Endothelial cell of umbilical vein (primary cell): ENCODE measurements at regions of chr17 and their contacts with region 1.

Region 1: GRCh38 chr17:56779898-56780733 is 53.6 kb downstream of the C17orf67 start:
- DNase-seq: peak; percentile 79
- H3K4me3 ChIP-seq: peak overlapping the region in 2 of 3 experiments; percentile 23 to 54
- H3K27ac ChIP-seq: no peak overlapping the region
- H3K4me1 ChIP-seq: peaks cover 11% of the 10 kb centered on the region
- H3K27me3 ChIP-seq: peaks cover 0 to 5% of the 10 kb centered on the region in 2 experiments
- CTCF ChIP-seq: peak; percentile 96 to 99
- POLR2A ChIP-seq: no peak

Region 2: GRCh38 chr17:56499799-56500388 is 280.2 kb before region 1 on chr17:
- CTCF ChIA-PET with region 1: interaction called, 40 read pairs
- POLR2A ChIA-PET with region 1: no interaction called
- dilution Hi-C with region 1: no loop called
- intact Hi-C with region 1: loop called (anchors 1 kb)
- DNase-seq: peak; percentile 47
- H3K4me3 ChIP-seq: no peak overlapping the region
- H3K27ac ChIP-seq: no peak overlapping the region
- H3K4me1 ChIP-seq: no peaks in the 10 kb centered on the region
- H3K27me3 ChIP-seq: peaks cover 2 to 9% of the 10 kb centered on the region in 2 experiments
- CTCF ChIP-seq: peak; percentile 25 to 33
- POLR2A ChIP-seq: no peak

Region 3: DNA sequence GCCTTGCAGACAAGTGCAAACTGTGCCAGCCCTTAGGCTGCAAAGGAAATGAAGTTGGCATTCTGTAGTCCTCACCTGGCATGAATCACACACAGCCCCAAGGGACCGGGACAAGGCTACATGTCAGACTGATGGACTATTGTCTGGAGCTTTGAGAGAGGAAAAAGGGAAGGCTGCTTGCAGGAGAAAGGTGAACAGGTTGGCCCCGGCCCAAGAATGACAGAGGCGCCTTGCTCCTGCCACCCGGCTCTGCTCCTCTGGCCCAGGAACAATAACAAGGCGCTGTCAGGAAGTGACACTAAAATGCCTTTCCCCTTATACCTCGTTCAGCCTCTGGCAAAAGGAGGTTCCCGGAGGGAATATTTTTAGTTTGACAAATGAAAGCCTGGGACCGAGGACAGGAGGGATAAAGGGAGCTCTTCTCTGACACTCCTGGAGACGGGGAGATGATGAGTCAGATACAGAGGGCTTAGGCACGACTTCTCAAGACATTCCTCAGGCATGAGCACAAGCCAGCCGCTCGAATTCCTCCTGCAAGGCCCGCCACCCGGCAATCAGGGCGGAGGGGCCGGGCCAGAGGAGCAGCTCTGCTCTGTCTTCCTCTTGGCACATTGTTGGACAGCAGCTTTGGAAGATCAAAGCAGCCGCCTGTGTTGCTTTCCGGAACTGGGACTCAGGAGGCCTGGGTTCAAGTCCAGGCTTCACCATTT is 80.8 kb before region 1 on chr17:
- CTCF ChIA-PET with region 1: interaction called, 5 read pairs
- POLR2A ChIA-PET with region 1: no interaction called
- dilution Hi-C with region 1: no loop called
- intact Hi-C with region 1: loop called (anchors 1 kb)
- DNase-seq: peak; percentile 56
- H3K4me3 ChIP-seq: no peak overlapping the region
- H3K27ac ChIP-seq: peak overlapping the region; percentile 88
- H3K4me1 ChIP-seq: peaks cover 18% of the 10 kb centered on the region
- H3K27me3 ChIP-seq: no peaks in the 10 kb centered on the region
- CTCF ChIP-seq: no peak
- POLR2A ChIP-seq: peak; percentile 42

Region 4: GRCh38 chr17:56762988-56763387 is 17.1 kb before region 1 on chr17:
- CTCF ChIA-PET with region 1: interaction called, 17 read pairs
- POLR2A ChIA-PET with region 1: no interaction called
- dilution Hi-C with region 1: no loop called
- intact Hi-C with region 1: no loop called
- DNase-seq: no peak
- H3K4me3 ChIP-seq: no peak overlapping the region
- H3K27ac ChIP-seq: no peak overlapping the region
- H3K4me1 ChIP-seq: no peaks in the 10 kb centered on the region
- H3K27me3 ChIP-seq: peaks cover 2 to 7% of the 10 kb centered on the region in 2 experiments
- CTCF ChIP-seq: no peak
- POLR2A ChIP-seq: no peak

Region 5: GRCh38 chr17:57121338-57122042 is 341.4 kb after region 1 on chr17:
- CTCF ChIA-PET with region 1: no interaction called
- POLR2A ChIA-PET with region 1: no interaction called
- dilution Hi-C with region 1: no loop called
- intact Hi-C with region 1: no loop called
- DNase-seq: peak; percentile 29
- H3K4me3 ChIP-seq: no peak overlapping the region
- H3K27ac ChIP-seq: no peak overlapping the region
- H3K4me1 ChIP-seq: no peaks in the 10 kb centered on the region
- H3K27me3 ChIP-seq: no peaks in the 10 kb centered on the region
- CTCF ChIP-seq: peak; percentile 29 to 64
- POLR2A ChIP-seq: no peak